AG04450 (cell line): ENCODE measurements at regions of chr4 and their contacts with region 1.

Region 1: GRCh38 chr4:68375667-68376559 is 26.0 kb upstream of the YTHDC1 start:
- DNase-seq: no peak
- H3K4me3 ChIP-seq: peak overlapping the region; percentile 39
- H3K27ac ChIP-seq: no peak overlapping the region
- H3K27me3 ChIP-seq: no peaks in the 10 kb centered on the region
- CTCF ChIP-seq: peak; percentile 95

Region 2: GRCh38 chr4:68271851-68272756 is 103.8 kb before region 1 on chr4:
- CTCF ChIA-PET with region 1: interaction called, 130 read pairs
- POLR2A ChIA-PET with region 1: no interaction called
- DNase-seq: peak; percentile 30
- H3K4me3 ChIP-seq: peak overlapping the region; percentile 49
- H3K27ac ChIP-seq: no peak overlapping the region
- H3K27me3 ChIP-seq: no peaks in the 10 kb centered on the region
- CTCF ChIP-seq: peak; percentile 73

Region 3: GRCh38 chr4:68338608-68339007 is 37.3 kb before region 1 on chr4:
- CTCF ChIA-PET with region 1: interaction called, 25 read pairs
- POLR2A ChIA-PET with region 1: no interaction called
- DNase-seq: no peak
- H3K4me3 ChIP-seq: no peak overlapping the region
- H3K27ac ChIP-seq: no peak overlapping the region
- H3K27me3 ChIP-seq: no peaks in the 10 kb centered on the region
- CTCF ChIP-seq: no peak

Region 4: DNA sequence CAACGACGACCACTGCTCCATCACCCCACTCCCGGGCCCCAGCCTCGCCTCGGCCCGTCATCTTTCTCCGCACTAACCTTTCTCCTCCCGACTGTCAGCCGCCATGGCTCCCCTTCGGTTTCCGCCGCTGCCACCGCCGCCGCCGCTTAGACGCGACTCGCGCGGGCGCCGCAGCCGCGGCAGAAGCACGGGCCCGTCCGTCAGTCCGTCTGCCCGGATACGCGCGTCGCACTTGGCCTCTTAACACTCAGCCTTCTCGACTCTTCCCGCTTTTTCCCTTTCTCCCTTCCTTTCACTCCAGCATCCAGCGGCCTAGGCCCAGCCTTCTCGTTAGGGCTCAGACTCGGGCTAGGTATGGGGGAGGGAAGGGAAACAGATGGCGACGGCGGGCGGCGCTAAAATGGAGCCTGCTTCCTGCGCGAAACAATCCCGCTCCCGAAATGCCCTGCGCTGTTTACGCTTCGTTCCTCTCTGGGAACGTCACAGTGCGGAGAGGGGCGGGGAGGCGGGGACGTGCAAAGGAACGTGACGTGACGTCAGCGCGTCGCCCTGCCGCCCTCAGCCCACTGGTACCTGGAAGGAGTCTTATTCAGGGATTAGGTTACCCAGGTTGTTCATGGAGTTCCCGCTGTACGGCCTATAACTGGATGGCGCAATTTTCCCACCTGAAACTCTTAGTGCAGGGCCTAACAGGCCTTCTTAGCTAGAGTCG is 26.1 kb before region 1 on chr4 and contains the start of gene YTHDC1:
- CTCF ChIA-PET with region 1: interaction called, 22 read pairs
- POLR2A ChIA-PET with region 1: no interaction called
- DNase-seq: peak; percentile 87
- H3K4me3 ChIP-seq: peak within 1 kb of the TSS; percentile 89
- H3K27ac ChIP-seq: peak within 1 kb of the TSS; percentile 95
- H3K27me3 ChIP-seq: peaks cover 3% of the 10 kb centered on the region
- CTCF ChIP-seq: no peak
- polyA plus RNA-seq, gene YTHDC1: 40.7 and 48.0 TPM in 2 replicates

Region 5: GRCh38 chr4:68388347-68388865 is 12.5 kb after region 1 on chr4:
- CTCF ChIA-PET with region 1: interaction called, 13 read pairs
- POLR2A ChIA-PET with region 1: no interaction called
- DNase-seq: no peak
- H3K4me3 ChIP-seq: no peak overlapping the region
- H3K27ac ChIP-seq: no peak overlapping the region
- H3K27me3 ChIP-seq: no peaks in the 10 kb centered on the region
- CTCF ChIP-seq: no peak